Dendritic cell treated with granulocyte-macrophage colony-stimulating factor and Interleukin-4, amounts not matched to agents 40 ng/mL and 50 ng/mL, for 4 days (primary cell): ENCODE measurements at regions of chr12 and their contacts with region 1.

Region 1: DNA sequence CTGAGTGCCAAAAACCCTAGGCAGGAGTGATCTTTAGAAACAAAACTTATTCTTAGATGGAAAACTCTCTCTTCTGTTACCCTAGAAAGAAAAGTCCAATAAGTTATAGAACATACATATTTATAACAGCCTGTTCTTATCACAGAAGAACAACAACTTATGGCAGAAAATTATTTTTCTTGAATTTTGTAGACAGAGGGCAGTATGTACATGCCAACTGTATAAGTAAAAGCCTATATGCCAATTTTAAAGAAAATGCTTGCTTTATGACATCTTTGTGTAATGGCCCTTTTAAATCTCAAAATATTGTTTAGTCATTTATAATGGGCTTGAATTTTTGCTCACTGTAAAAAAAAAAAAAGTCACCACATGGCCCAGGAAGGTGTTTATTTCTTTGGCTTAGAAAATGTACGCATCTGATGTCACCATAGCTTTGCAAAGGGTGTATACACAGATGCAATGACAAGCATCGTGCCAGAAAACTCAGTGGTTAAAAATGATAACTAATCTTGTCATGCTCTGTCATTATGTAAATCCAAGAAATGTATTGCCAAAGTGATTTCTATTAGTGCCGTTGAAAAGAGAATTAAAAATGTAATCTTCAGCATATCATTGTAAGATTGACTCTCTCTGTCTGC is 38.3 kb upstream of the GRIP1 start:
- H3K4me3 Mint-ChIP-seq: no peak overlapping the region
- H3K27ac Mint-ChIP-seq: no peak overlapping the region
- H3K4me1 Mint-ChIP-seq: no peaks in the 10 kb centered on the region
- H3K27me3 Mint-ChIP-seq: no peaks in the 10 kb centered on the region

Region 2: GRCh38 chr12:66417217-66417616 is 299.9 kb before region 1 on chr12:
- intact Hi-C with region 1: loop called (anchors 10 kb)
- H3K4me3 Mint-ChIP-seq: no peak overlapping the region
- H3K27ac Mint-ChIP-seq: no peak overlapping the region
- H3K4me1 Mint-ChIP-seq: no peaks in the 10 kb centered on the region
- H3K27me3 Mint-ChIP-seq: no peaks in the 10 kb centered on the region

Region 3: DNA sequence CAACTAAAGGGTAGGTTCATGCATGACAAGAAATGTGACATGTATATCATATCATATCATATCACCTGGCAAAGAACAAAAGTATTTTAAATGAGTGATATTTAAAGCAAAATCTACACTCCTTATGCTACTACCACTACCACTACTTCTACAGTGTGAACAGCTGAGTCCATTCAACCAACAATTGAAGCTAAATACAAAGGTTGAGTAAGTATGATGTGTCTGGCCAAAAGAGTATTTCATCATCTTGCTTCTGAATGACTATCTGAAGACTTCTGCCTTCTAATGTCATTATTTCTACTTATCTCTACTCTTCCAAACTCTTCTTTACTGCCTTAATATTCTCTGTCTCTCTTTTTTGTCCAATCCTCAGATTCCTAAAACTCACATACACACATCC is 259.4 kb after region 1 on chr12:
- intact Hi-C with region 1: no loop called
- H3K4me3 Mint-ChIP-seq: no peak overlapping the region
- H3K27ac Mint-ChIP-seq: no peak overlapping the region
- H3K4me1 Mint-ChIP-seq: no peaks in the 10 kb centered on the region
- H3K27me3 Mint-ChIP-seq: no peaks in the 10 kb centered on the region